OCI-LY7 (cell line): ENCODE measurements at regions of chr12 and their contacts with region 1.

Region 1: DNA sequence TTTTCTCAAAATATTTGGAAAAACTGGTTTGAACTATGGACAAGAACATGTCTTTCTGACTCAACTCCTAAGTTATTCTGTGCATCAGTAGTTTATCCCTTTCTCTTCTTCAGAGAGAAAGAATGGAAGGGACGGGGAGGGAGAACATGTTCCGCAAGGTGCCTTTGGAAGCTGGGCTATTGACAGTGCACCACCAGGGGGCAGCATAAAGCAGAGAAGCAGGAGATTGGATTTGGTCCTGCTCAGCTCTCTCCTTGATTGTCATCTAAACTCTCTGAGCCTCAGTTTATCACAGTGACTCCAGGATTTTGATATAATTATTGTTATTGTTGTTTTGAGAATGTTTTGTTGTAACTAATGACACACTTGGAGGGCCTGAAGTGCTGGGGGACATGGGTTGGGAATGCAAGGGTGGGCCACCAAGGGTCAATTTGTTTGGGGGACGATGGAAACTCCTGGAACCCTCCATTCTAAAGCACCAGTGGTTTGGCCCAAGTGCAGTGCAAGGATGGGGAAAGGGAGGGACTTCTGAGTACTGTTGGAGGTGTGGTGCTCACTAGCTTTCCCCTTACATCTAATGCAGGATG is 45.3 kb upstream of the ANO6 start:
- DNase-seq: peak; percentile 70
- H3K4me3 ChIP-seq: no peak overlapping the region
- H3K27ac ChIP-seq: no peak overlapping the region
- H3K4me1 ChIP-seq: no peaks in the 10 kb centered on the region
- CTCF ChIP-seq: peak; percentile 96

Region 2: DNA sequence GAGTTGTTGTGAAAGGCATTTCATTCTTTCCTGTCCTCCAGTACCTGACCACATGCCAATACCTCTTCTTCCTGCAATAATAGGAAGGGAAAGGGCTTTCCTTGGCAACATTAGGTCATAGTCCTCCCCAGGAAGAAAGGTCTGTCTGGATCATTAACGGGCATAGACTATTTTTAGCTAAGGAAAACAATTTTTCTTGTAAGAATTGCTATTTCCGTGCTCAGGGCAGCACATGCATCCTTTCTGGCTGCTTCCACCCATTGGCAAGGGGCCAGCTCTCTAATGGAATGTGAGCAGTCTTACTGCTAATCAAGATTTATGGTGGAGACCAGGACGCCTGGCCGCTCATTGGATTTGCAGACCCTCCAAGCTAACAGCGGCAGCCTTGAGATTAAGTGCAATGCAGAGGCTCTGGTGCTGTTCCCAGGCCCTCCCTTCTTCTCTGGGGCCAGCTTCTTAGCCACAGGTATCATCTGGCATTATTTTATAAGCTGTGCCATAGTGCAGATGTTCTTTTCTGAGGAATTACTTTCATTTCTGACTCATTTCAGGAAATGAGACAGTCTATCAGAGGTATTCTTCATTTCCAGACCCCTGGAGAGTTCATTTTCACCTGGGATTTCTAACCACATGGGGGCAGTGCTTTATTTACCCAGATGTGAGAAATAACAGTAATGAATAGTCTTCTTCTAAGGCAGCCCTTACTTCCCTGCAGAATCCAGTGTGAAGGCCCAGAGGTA is 98.3 kb after region 1 on chr12:
- CTCF ChIA-PET with region 1: no interaction called
- POLR2A ChIA-PET with region 1: no interaction called
- intact Hi-C with region 1: loop called (anchors 10 kb)
- DNase-seq: peak; percentile 17
- H3K4me3 ChIP-seq: no peak overlapping the region
- H3K27ac ChIP-seq: no peak overlapping the region
- H3K4me1 ChIP-seq: no peaks in the 10 kb centered on the region
- CTCF ChIP-seq: peak; percentile 74

Region 3: GRCh38 chr12:45388545-45388944 is 218.0 kb after region 1 on chr12:
- CTCF ChIA-PET with region 1: no interaction called
- POLR2A ChIA-PET with region 1: interaction called, 3 read pairs
- intact Hi-C with region 1: loop called (anchors 2 kb)
- DNase-seq: peak; percentile 11
- H3K4me3 ChIP-seq: no peak overlapping the region
- H3K27ac ChIP-seq: no peak overlapping the region
- H3K4me1 ChIP-seq: no peaks in the 10 kb centered on the region
- CTCF ChIP-seq: peak; percentile 66